Activated CD4-positive, alpha-beta T cell treated with anti-CD3 and anti-CD28 coated beads, Interleukin-2, amount 10 ng/mL, durations not matched to agents 7 days and 5 days (primary cell): ENCODE measurements at regions of chr12 and their contacts with region 1.

Region 1: DNA sequence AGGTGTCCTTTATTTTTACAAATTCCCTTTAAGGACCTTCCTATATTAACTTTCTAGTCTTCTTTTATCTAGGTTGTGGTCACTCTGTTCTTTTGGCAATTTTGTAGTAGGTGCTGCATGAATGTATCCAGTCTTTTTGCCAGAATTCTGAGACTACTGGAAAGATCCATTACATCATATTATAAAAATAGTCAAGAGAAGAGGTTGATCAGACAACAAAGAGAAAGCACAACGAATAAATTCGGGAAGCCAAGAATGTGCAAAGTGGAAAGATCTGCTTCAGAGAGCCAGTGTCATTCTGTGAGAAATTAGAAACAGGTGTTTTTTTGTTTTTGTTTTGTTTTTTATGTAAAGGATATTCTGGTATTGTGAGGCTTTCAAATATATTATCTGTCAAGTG is 15.8 kb upstream of the SLC16A7 start:
- DNase-seq: no peak
- H3K4me3 Mint-ChIP-seq: no peak overlapping the region
- H3K27ac Mint-ChIP-seq: no peak overlapping the region
- H3K4me1 Mint-ChIP-seq: peaks cover 43% of the 10 kb centered on the region
- H3K27me3 Mint-ChIP-seq: peaks cover 3% of the 10 kb centered on the region

Region 2: GRCh38 chr12:59149997-59150642 is 429.9 kb before region 1 on chr12:
- CTCF ChIA-PET with region 1: no interaction called
- POLR2A ChIA-PET with region 1: no interaction called
- DNase-seq: peak; percentile 31
- H3K4me3 Mint-ChIP-seq: no peak overlapping the region
- H3K27ac Mint-ChIP-seq: no peak overlapping the region
- H3K4me1 Mint-ChIP-seq: no peaks in the 10 kb centered on the region
- H3K27me3 Mint-ChIP-seq: no peaks in the 10 kb centered on the region

Region 3: DNA sequence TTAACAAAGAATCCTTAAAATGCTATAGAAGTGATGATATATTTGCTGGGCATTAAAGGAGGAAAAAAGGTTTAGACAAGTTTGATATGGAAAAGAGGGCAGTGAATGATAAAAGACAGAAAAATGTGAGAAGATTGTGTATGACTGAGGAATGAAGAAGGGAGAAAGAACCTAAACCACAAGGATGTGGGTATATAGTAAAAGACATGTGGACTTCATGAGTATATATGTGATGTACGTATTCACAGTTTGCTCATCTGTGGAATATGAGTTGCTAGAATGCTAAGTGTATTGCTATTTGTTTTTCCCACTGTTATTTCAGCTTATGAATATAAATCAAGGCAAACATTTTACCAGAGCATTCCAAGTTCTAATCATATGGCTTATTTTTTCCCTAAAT is 13.7 kb after region 1 on chr12:
- CTCF ChIA-PET with region 1: no interaction called
- POLR2A ChIA-PET with region 1: interaction called, 13 read pairs
- DNase-seq: no peak
- H3K4me3 Mint-ChIP-seq: no peak overlapping the region
- H3K27ac Mint-ChIP-seq: no peak overlapping the region
- H3K4me1 Mint-ChIP-seq: peaks cover 37% of the 10 kb centered on the region
- H3K27me3 Mint-ChIP-seq: no peaks in the 10 kb centered on the region